ENCODE measurements at regions of chr19 and their contacts with region 1.

Region 1: GRCh38 chr19:12757544-12758274 is 6.1 kb downstream of the BEST2 start:
- DNase-seq: peak; percentile 70 to 77
- ATAC-seq: peak; percentile 80 to 83 (median 82)
- H3K4me3 ChIP-seq: no peak overlapping the region
- H3K4me3 Mint-ChIP-seq: no peak overlapping the region
- H3K27ac ChIP-seq: no peak overlapping the region
- H3K27ac Mint-ChIP-seq: no peak overlapping the region
- H3K4me1 ChIP-seq: peaks cover 9% of the 10 kb centered on the region
- H3K4me1 Mint-ChIP-seq: peaks cover 0 to 5% of the 10 kb centered on the region in 2 donors
- H3K27me3 ChIP-seq: peaks cover 2% of the 10 kb centered on the region
- H3K27me3 Mint-ChIP-seq: peaks cover 0 to 9% of the 10 kb centered on the region in 2 donors
- CTCF ChIP-seq: peak; percentile 83

Region 2: GRCh38 chr19:12564016-12564664 is 193.6 kb before region 1 on chr19:
- intact Hi-C with region 1: loop called (anchors 1 kb)
- DNase-seq: peak; percentile 87 to 93
- ATAC-seq: peak; percentile 94 to 100 (median 99)
- H3K4me3 ChIP-seq: no peak overlapping the region
- H3K4me3 Mint-ChIP-seq: no peak overlapping the region
- H3K27ac ChIP-seq: no peak overlapping the region
- H3K27ac Mint-ChIP-seq: no peak overlapping the region
- H3K4me1 ChIP-seq: peaks cover 5% of the 10 kb centered on the region
- H3K4me1 Mint-ChIP-seq: peaks cover 4 to 5% of the 10 kb centered on the region in 2 donors
- H3K27me3 ChIP-seq: no peaks in the 10 kb centered on the region
- H3K27me3 Mint-ChIP-seq: no peaks in the 10 kb centered on the region
- CTCF ChIP-seq: peak; percentile 94

Region 3: DNA sequence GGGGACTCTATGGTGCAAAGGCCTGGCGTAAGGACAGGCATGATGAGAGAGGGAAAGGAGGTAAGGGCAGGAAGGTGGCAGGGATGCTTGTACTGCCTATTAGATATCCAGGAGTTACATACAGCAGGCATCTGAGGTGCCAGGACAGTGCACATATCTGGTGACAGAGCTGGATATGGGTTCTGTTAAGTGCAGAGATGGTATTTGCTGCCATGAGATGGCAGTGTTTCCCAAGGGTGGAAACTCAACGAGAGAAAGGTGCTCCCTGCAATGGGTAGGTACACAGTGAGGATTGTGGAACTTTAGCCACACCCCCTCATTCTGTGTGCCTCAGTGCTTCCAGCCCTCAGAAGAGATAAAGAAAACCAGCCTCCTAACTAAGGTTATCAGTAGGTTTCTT is 40.8 kb before region 1 on chr19:
- intact Hi-C with region 1: loop called (anchors 2 kb)
- DNase-seq: peak in 1 of 2 donors; percentile 77
- ATAC-seq: peak; percentile 43 to 64 (median 53)
- H3K4me3 ChIP-seq: no peak overlapping the region
- H3K4me3 Mint-ChIP-seq: no peak overlapping the region
- H3K27ac ChIP-seq: no peak overlapping the region
- H3K27ac Mint-ChIP-seq: peak overlapping the region in 1 of 2 donors; percentile 9
- H3K4me1 ChIP-seq: peaks cover 16% of the 10 kb centered on the region
- H3K4me1 Mint-ChIP-seq: peaks cover 7 to 24% of the 10 kb centered on the region in 2 donors
- H3K27me3 ChIP-seq: no peaks in the 10 kb centered on the region
- H3K27me3 Mint-ChIP-seq: no peaks in the 10 kb centered on the region
- CTCF ChIP-seq: no peak

Region 4: GRCh38 chr19:12789904-12790619 is 32.4 kb after region 1 on chr19:
- intact Hi-C with region 1: no loop called
- DNase-seq: peak; percentile 94 to 95
- ATAC-seq: peak; percentile 35 to 56 (median 41)
- H3K4me3 ChIP-seq: peak overlapping the region; percentile 95
- H3K4me3 Mint-ChIP-seq: peak overlapping the region; percentile 96
- H3K27ac ChIP-seq: peak overlapping the region; percentile 93
- H3K27ac Mint-ChIP-seq: peak overlapping the region; percentile 97 to 99
- H3K4me1 ChIP-seq: peaks cover 57% of the 10 kb centered on the region
- H3K4me1 Mint-ChIP-seq: peaks cover 28 to 38% of the 10 kb centered on the region in 2 donors
- H3K27me3 ChIP-seq: no peaks in the 10 kb centered on the region
- H3K27me3 Mint-ChIP-seq: no peaks in the 10 kb centered on the region
- CTCF ChIP-seq: no peak